Activated naive CD4-positive, alpha-beta T cell treated with anti-CD3 and anti-CD28 coated beads, Interleukin-2, amount 10 ng/mL, durations not matched to agents 7 days and 5 days (primary cell): ENCODE measurements at regions of chr1 and their contacts with region 1.

Region 1: GRCh38 chr1:147892731-147893214 is 9.8 kb upstream of the GJA8 start:
- DNase-seq: peak; percentile 48
- H3K4me3 Mint-ChIP-seq: no peak overlapping the region
- H3K27ac Mint-ChIP-seq: no peak overlapping the region
- H3K4me1 Mint-ChIP-seq: no peaks in the 10 kb centered on the region
- H3K27me3 Mint-ChIP-seq: peaks cover 4% of the 10 kb centered on the region

Region 2: DNA sequence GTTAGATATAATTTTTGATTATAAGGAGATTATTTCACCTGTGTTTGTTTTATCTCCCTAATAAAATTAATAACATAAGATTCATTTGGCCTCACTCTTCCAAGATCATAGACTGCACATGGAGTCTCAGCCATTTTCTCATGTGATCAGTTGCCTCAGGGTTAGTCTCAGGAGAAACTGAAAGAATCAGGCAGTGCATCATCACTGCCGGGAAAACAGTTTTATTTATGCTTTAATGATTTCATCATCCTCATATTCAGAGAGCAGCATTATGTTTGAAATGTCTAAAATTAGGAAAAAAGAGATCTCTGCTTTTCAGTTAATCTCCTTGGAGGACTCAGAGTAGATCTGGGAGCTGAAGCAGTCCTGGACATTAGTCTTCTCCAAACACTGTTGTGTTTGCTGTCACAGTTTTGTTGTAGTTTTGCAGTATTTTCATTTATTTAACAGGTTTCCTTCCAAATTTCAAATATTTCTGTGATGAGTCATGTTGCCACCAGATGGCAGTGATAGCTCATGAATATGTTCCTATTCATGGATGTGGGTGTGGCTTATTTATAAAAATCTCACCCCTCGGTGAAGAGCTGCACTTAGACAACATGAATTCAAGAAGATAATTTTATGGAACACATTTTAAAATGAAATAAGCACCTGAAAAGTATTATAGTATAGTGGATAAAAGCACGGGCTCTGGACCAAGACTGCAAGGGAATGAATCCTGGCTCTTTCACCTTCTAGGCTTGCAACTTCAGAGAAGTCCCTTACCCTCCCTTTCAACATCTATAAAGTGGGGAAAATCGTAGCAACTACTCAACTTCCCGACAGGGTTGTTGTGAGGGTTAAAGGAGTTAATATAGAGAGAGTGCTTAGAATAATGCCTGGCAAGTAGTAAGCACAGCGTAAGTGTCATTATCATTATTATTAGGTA is 619.1 kb before region 1 on chr1:
- CTCF ChIA-PET with region 1: interaction called, 18 read pairs
- DNase-seq: peak; percentile 46
- H3K4me3 Mint-ChIP-seq: no peak overlapping the region
- H3K27ac Mint-ChIP-seq: no peak overlapping the region
- H3K4me1 Mint-ChIP-seq: peaks cover 3% of the 10 kb centered on the region
- H3K27me3 Mint-ChIP-seq: no peaks in the 10 kb centered on the region

Region 3: DNA sequence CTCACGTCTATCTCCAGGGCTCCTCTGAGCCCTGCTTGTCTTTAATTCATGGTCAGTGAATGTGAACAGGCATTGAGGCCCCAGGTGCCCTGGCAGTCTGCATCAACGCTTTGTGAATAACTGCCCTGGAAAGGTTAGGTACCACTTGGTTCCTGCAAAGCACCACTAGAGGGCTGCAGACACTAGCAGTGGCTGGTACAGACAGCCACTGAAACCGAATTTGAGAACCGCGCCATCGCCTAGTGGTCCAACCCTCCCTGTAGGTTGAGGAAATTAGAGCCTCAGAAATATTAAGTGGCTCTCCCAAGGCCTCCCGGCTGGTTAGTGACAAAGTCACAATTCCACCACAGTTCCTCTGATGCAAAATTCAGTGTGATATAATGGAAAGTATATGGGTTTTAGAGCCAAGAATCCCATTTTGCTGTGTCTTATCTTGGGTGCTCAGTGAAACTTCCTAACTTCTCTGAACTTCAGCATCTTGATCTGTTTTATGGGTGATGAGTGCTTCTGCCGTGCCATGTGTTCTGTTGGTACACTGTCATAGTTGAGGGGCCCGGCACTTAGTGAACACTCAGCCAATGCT is 397.7 kb before region 1 on chr1:
- CTCF ChIA-PET with region 1: interaction called, 20 read pairs
- DNase-seq: peak; percentile 79
- H3K4me3 Mint-ChIP-seq: no peak overlapping the region
- H3K27ac Mint-ChIP-seq: no peak overlapping the region
- H3K4me1 Mint-ChIP-seq: peaks cover 4% of the 10 kb centered on the region
- H3K27me3 Mint-ChIP-seq: peaks cover 21% of the 10 kb centered on the region

Region 4: GRCh38 chr1:147723691-147724323 is 169.0 kb before region 1 on chr1:
- CTCF ChIA-PET with region 1: interaction called, 14 read pairs
- DNase-seq: peak; percentile 44
- H3K4me3 Mint-ChIP-seq: no peak overlapping the region
- H3K27ac Mint-ChIP-seq: no peak overlapping the region
- H3K4me1 Mint-ChIP-seq: no peaks in the 10 kb centered on the region
- H3K27me3 Mint-ChIP-seq: peaks cover 23% of the 10 kb centered on the region